PC-9 (cell line): ENCODE measurements at regions of chr17 and their contacts with region 1.

Region 1: GRCh38 chr17:68981288-68981687 is 26.1 kb upstream of the ABCA8 start:
- DNase-seq: peak in 1 of 2 experiments; percentile 68
- H3K4me3 ChIP-seq: peak overlapping the region; percentile 37; the same call in 1 of the 2 replicates
- H3K27ac ChIP-seq: no peak overlapping the region
- H3K4me1 ChIP-seq: peaks cover 7% of the 10 kb centered on the region; the same call in 1 of the 2 replicates
- H3K27me3 ChIP-seq: no peaks in the 10 kb centered on the region
- CTCF ChIP-seq: no peak

Region 2: GRCh38 chr17:68954863-68955841 is 26.1 kb before region 1 on chr17 and contains the start of gene ABCA8:
- CTCF ChIA-PET with region 1: no interaction called
- POLR2A ChIA-PET with region 1: no interaction called
- intact Hi-C with region 1: no loop called
- DNase-seq: no peak
- H3K4me3 ChIP-seq: no peak within 1 kb of the TSS
- H3K27ac ChIP-seq: no peak within 1 kb of the TSS
- H3K4me1 ChIP-seq: no peaks in the 10 kb centered on the region
- H3K27me3 ChIP-seq: no peaks in the 10 kb centered on the region
- CTCF ChIP-seq: no peak
- total RNA-seq, gene ABCA8: not detected in 2 replicates

Region 3: DNA sequence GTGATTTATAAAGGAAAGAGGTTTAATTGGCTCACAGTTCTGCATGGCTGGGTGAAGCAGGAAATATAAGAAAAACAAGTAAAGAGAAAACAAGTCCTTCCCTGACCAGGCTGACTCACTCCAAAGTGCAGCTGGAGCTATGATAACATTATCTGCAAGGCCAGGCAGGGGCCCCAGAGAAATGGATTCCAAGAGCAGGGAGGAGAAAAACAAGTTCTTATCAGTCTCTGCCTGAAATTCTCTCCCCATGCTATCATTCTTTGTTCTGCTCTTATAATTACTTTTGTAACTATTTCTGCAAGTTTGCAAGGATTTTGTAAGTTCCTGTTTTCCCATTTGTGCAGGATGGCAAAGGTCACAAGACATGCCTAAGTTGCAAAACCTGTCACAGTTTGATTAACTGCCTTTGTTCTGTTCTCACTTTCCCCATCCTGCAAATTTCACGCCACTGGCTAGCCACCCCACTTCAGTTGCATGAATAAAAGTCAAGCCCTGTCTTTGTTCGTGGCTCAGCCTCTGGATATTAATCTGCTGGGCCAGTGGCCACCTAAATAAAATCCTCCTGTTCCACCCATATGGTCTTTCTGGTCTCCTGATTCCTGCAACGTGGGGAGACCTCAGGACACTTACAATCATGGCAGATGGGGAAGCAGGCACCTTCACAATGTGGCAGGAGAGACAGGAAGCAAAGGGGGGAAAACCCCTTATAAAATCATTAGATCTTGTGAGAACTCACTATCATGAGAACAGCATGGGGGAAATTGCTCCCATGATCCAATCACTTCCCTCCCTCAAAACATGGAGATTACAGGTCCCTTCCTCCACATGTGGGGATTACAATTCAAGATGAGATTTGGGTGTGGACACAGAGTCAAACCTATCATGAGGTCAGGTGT is 66.3 kb after region 1 on chr17:
- CTCF ChIA-PET with region 1: no interaction called
- POLR2A ChIA-PET with region 1: no interaction called
- intact Hi-C with region 1: loop called (anchors 1 kb)
- DNase-seq: peak; percentile 63 to 68
- H3K4me3 ChIP-seq: peak overlapping the region; percentile 35; the same call in 1 of the 2 replicates
- H3K27ac ChIP-seq: peak overlapping the region; percentile 58
- H3K4me1 ChIP-seq: peaks cover 23% of the 10 kb centered on the region
- H3K27me3 ChIP-seq: no peaks in the 10 kb centered on the region
- CTCF ChIP-seq: no peak